ENCODE measurements at regions of chr4 and their contacts with region 1.

Region 1: GRCh38 chr4:24568425-24568824 is 15.9 kb downstream of the DHX15 start:
- DNase-seq: no peak
- H3K4me3 ChIP-seq: no peak overlapping the region
- H3K4me3 Mint-ChIP-seq: no peak overlapping the region
- H3K27ac Mint-ChIP-seq: no peak overlapping the region
- H3K4me1 ChIP-seq: peaks cover 27% of the 10 kb centered on the region
- H3K4me1 Mint-ChIP-seq: peaks cover 19% of the 10 kb centered on the region
- H3K27me3 ChIP-seq: no peaks in the 10 kb centered on the region
- H3K27me3 Mint-ChIP-seq: no peaks in the 10 kb centered on the region
- CTCF ChIP-seq: no peak

Region 2: DNA sequence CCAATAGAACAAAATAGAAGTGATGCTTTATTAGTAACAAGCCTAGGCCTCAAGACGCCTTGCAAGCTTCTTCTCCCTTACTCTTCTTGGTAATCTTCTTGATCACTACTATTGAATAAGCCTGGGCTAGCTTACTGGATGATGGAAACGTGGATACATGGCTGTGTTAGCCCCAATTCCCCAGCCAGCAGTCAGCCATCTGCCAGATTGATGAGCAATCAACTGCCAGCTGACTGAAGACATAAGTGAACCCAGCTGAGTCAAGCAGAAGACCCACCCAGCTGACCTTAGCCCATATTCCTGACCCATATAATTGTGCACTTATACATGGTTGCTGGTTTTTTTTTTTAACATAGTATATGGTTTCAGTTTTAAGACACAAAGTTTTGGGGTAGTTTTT is 114.5 kb before region 1 on chr4:
- CTCF ChIA-PET with region 1: no interaction called
- POLR2A ChIA-PET with region 1: no interaction called
- intact Hi-C with region 1: no loop called
- DNase-seq: no peak
- H3K4me3 ChIP-seq: no peak overlapping the region
- H3K4me3 Mint-ChIP-seq: no peak overlapping the region
- H3K27ac Mint-ChIP-seq: no peak overlapping the region
- H3K4me1 ChIP-seq: no peaks in the 10 kb centered on the region
- H3K4me1 Mint-ChIP-seq: no peaks in the 10 kb centered on the region
- H3K27me3 ChIP-seq: no peaks in the 10 kb centered on the region
- H3K27me3 Mint-ChIP-seq: peaks cover 21% of the 10 kb centered on the region
- CTCF ChIP-seq: no peak

Region 3: DNA sequence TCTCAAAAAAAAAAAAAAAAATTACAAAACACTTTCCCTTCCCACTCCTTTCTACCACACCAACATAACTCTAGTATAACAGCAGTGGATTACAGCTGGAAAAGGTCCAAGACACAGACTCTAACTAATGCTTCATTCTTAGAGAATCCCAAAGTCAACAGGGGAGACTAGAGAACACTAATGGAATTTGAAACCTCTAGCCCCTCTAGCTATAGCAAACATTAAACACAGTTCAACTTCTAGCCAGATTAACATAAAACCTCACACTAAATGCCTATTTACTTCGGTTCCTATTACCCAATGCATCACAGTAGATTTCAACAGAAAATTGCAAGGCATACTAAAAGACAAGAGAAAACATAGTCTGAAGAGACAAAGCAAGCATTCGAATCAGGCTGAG is 26.5 kb after region 1 on chr4:
- CTCF ChIA-PET with region 1: no interaction called
- POLR2A ChIA-PET with region 1: no interaction called
- intact Hi-C with region 1: no loop called
- DNase-seq: peak in 1 of 2 experiments; percentile 66
- H3K4me3 ChIP-seq: no peak overlapping the region
- H3K4me3 Mint-ChIP-seq: peak overlapping the region; percentile 40
- H3K27ac Mint-ChIP-seq: peak overlapping the region; percentile 99
- H3K4me1 ChIP-seq: peaks cover 59% of the 10 kb centered on the region
- H3K4me1 Mint-ChIP-seq: peaks cover 38% of the 10 kb centered on the region
- H3K27me3 ChIP-seq: no peaks in the 10 kb centered on the region
- H3K27me3 Mint-ChIP-seq: no peaks in the 10 kb centered on the region
- CTCF ChIP-seq: no peak

Region 4: GRCh38 chr4:24642981-24643547 is 74.6 kb after region 1 on chr4:
- CTCF ChIA-PET with region 1: no interaction called
- POLR2A ChIA-PET with region 1: no interaction called
- intact Hi-C with region 1: loop called (anchors 5 kb)
- DNase-seq: peak; percentile 69 to 76
- H3K4me3 ChIP-seq: no peak overlapping the region
- H3K4me3 Mint-ChIP-seq: peak overlapping the region; percentile 39
- H3K27ac Mint-ChIP-seq: peak overlapping the region; percentile 69
- H3K4me1 ChIP-seq: peaks cover 24% of the 10 kb centered on the region
- H3K4me1 Mint-ChIP-seq: peaks cover 16% of the 10 kb centered on the region
- H3K27me3 ChIP-seq: no peaks in the 10 kb centered on the region
- H3K27me3 Mint-ChIP-seq: no peaks in the 10 kb centered on the region
- CTCF ChIP-seq: no peak

Region 5: GRCh38 chr4:24657768-24658617 is 89.6 kb after region 1 on chr4:
- CTCF ChIA-PET with region 1: no interaction called
- POLR2A ChIA-PET with region 1: no interaction called
- intact Hi-C with region 1: loop called (anchors 5 kb)
- DNase-seq: peak; percentile 15 to 40
- H3K4me3 ChIP-seq: no peak overlapping the region
- H3K4me3 Mint-ChIP-seq: no peak overlapping the region
- H3K27ac Mint-ChIP-seq: peak overlapping the region; percentile 40
- H3K4me1 ChIP-seq: peaks cover 36% of the 10 kb centered on the region
- H3K4me1 Mint-ChIP-seq: peaks cover 40% of the 10 kb centered on the region
- H3K27me3 ChIP-seq: no peaks in the 10 kb centered on the region
- H3K27me3 Mint-ChIP-seq: no peaks in the 10 kb centered on the region
- CTCF ChIP-seq: no peak

Region 6: DNA sequence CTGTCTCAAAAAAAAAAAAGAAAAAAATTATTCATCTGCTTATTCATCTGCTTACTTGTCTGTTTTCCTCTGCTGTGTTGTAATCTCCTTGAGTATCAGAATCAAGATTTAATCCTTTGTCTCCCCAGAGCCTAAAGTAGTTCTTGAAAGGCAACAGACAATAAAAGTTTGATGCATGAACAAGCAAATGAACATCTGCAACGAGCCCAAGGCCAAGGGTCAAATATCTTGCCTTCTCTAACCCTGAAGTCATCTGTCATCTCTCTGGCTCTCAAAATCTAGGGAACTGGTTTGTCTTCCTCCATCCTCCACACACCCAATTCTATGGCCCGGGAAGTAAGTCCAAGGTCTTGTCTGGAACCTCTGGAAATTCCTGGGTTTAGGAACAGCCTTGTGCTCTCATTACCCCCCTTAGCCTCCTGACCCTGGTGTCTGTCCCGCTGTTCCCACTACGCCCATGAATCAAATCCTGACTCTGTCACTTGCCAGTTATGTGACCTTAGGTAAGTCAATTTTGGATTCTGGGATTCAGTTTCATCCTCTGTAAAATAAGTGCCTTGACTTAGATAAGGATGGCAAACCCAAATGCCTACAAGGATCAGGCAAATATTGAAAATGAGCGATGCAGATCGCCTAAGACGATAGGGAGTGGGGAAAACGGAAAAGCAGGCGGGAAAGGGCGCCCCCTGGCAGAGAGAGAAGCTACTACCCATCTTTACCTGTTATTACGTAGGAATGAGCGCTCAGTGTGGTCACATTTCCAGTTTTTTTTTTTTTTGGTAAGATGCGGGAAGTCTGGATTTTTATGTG is 118.7 kb after region 1 on chr4:
- CTCF ChIA-PET with region 1: interaction called, 3 read pairs
- POLR2A ChIA-PET with region 1: no interaction called
- intact Hi-C with region 1: loop called (anchors 2 kb)
- DNase-seq: peak; percentile 47 to 67
- H3K4me3 ChIP-seq: no peak overlapping the region
- H3K4me3 Mint-ChIP-seq: no peak overlapping the region
- H3K27ac Mint-ChIP-seq: no peak overlapping the region
- H3K4me1 ChIP-seq: peaks cover 6% of the 10 kb centered on the region
- H3K4me1 Mint-ChIP-seq: peaks cover 27% of the 10 kb centered on the region
- H3K27me3 ChIP-seq: no peaks in the 10 kb centered on the region
- H3K27me3 Mint-ChIP-seq: no peaks in the 10 kb centered on the region
- CTCF ChIP-seq: peak; percentile 44 to 74